Transverse colon (tissue), 4 donors: ENCODE measurements at regions of chr10 and their contacts with region 1.

Region 1: DNA sequence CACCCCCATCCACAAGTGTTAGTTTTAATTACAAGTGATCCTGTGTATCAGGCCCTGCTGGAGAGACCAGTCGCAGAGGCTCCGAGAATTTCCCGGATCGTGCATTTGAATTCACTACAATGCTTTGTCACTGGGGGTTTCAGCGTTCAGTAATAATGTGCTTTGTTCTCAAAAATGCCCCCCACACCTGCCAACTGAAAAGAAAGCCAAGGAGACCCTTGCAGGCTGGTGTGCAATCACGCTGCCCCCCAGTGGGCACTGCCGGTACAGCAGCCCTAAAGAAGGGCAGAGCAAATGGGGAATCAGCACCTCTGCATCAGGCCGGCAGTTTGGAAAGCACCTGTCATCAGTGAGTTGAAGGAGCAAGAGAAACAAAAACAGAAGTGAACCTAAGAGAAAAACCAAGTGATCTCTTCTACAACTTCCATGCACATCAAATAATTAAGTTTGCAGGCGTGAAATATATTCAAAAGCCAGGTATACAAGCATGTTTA is 177.6 kb downstream of the PARD3 start:
- DNase-seq: peak; percentile 69
- H3K4me3 ChIP-seq: no peak overlapping the region
- H3K27ac ChIP-seq: no peak overlapping the region
- H3K4me1 ChIP-seq: peaks cover 3 to 22% (median 10%) of the 10 kb centered on the region in 4 donors
- H3K27me3 ChIP-seq: no peaks in the 10 kb centered on the region
- CTCF ChIP-seq: peak; percentile 87 to 97 (median 95)
- EP300 ChIP-seq: no peak
- POLR2A ChIP-seq: no peak

Region 2: DNA sequence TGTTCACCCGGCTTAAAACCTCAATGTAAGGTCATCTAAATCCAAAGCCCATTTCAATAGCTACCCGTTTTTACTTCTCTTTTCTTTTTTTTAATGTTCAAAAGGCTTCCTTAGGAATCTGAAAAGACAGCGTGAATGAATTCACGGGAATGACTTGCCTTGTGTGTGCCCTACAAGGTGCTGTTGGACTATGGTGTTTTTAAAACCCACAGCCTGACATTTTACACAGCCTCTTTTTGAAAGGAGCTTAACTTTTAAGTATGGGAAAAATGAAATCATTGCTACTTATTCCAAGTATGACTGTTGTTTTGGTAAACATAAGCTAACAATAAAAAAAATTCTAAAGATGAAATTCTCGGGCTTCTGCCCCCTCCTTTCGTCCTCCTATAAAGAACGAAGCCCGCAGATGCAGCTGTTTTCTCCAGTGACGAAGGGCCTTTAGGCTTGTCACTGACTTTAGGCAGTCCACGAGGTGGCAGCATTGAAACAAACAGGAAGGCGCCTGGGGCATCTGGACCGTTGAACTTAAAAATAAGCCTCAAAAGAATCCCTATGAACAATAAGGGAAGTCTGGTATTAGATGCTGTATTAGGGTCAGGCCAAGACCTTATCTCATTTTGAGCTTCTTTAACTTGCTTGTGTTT is 1444.3 kb before region 1 on chr10:
- in situ Hi-C with region 1: loop called in 3 of 4 experiments (anchors 25 kb)
- intact Hi-C with region 1: no loop called
- DNase-seq: peak; percentile 81
- H3K4me3 ChIP-seq: no peak overlapping the region
- H3K27ac ChIP-seq: peak overlapping the region in 3 of 4 donors; percentile 32 to 38 (median 32)
- H3K4me1 ChIP-seq: peaks cover 0 to 37% (median 14%) of the 10 kb centered on the region in 4 donors
- H3K27me3 ChIP-seq: no peaks in the 10 kb centered on the region
- CTCF ChIP-seq: peak; percentile 72 to 80 (median 75)
- EP300 ChIP-seq: no peak
- POLR2A ChIP-seq: no peak

Region 3: GRCh38 chr10:33321513-33321912 is 1316.0 kb before region 1 on chr10:
- in situ Hi-C with region 1: loop called (anchors 10 to 25 kb)
- intact Hi-C with region 1: loop called (anchors 5 kb)
- DNase-seq: no peak
- H3K4me3 ChIP-seq: no peak overlapping the region
- H3K27ac ChIP-seq: no peak overlapping the region
- H3K4me1 ChIP-seq: peaks cover 0 to 5% (median 0%) of the 10 kb centered on the region in 4 donors
- H3K27me3 ChIP-seq: no peaks in the 10 kb centered on the region
- CTCF ChIP-seq: no peak
- EP300 ChIP-seq: no peak
- POLR2A ChIP-seq: no peak

Region 4: DNA sequence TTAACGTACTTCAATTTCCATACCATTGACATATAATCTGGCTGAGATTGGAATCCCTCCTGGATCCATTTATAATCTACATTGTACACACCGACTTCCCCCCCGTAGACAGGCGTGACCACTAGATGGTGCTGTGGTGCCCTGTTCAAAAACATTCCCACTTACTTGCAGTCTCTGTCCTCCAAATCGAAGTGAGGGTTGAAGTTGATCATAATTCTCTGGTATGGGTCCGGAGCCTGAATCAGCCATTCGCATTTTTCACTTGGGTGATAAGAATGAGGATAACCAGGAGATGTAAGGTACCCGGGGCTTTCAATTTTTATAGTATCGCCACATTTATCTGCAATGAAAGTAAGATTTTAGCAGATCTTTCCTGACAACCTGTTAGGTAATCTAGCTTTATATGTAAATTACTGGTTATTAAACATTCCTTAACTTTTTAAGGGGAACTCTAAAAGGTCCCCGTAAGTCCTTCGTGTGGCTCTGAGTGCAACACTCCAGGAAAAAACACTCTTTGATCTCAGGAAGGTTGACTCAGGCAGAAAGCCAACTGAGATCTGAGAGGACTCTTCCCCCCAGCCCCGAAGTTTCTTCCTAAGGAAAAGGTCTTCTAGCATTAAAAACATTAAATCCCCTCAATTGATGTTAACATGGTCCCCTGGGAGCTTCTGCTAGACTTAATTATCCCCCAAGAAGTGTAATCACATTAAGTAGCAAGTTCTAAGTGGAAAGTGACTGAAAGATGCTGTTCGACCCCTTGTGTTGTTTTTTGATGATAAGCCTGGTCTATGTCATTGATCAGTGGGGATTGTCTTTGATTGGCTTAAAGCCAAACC is 1306.7 kb before region 1 on chr10:
- in situ Hi-C with region 1: loop called (anchors 10 to 25 kb)
- intact Hi-C with region 1: no loop called
- DNase-seq: peak; percentile 87
- H3K4me3 ChIP-seq: peak overlapping the region in 2 of 4 donors; percentile 51 to 60
- H3K27ac ChIP-seq: peak overlapping the region; percentile 22 to 90 (median 57)
- H3K4me1 ChIP-seq: peaks cover 0 to 17% (median 7%) of the 10 kb centered on the region in 4 donors
- H3K27me3 ChIP-seq: no peaks in the 10 kb centered on the region
- CTCF ChIP-seq: peak; percentile 82 to 90 (median 87)
- EP300 ChIP-seq: no peak
- POLR2A ChIP-seq: no peak

Region 5: DNA sequence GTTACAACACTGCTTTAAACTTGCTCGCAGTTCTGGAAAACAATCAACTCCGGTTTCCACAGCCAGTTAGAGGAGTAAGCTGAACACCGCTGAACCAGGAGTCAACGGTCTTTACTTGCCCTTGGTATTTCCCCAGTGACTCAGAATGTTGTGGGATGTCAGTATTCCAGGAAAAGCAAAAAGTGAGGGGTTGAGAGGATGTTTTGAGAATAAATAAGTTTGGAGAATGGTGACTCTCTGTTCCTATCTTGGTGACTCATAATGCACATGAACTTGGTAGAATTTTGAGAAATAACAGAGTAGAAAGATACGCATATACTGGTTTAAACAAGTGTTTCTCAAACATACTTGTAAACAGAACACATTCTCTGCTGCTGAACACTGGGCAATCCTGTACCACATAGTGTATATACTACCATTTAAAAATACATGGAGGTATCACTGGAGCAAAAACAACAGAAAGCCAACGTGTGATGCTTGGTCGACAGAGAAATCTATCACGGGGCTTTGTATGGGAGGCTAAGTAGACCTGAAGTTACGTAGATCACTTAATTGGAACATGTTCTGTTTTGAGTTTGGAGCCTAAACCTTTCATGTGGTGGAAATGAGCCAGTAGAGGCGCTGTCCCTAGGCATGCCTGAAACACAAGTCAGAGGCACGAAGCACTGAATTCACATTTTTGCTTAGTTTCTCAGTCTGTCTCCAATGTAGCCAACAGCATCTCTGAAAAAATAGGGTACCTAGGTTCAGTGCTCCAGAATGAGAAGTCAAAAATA is 356.7 kb before region 1 on chr10:
- in situ Hi-C with region 1: no loop called
- intact Hi-C with region 1: loop called (anchors 10 kb)
- DNase-seq: no peak
- H3K4me3 ChIP-seq: no peak overlapping the region
- H3K27ac ChIP-seq: peak overlapping the region; percentile 19 to 58 (median 42)
- H3K4me1 ChIP-seq: no peaks in the 10 kb centered on the region
- H3K27me3 ChIP-seq: no peaks in the 10 kb centered on the region
- CTCF ChIP-seq: no peak
- EP300 ChIP-seq: no peak
- POLR2A ChIP-seq: no peak